ENCODE measurements at regions of chr3 and their contacts with region 1.

Region 1: GRCh38 chr3:49906004-49906743 is 2.5 kb upstream of the MST1R start:
- DNase-seq: peak; percentile 69 to 87
- ATAC-seq: peak; percentile 39
- H3K4me3 ChIP-seq: no peak overlapping the region
- H3K27ac ChIP-seq: peak overlapping the region in 1 of 2 donors; percentile 30
- H3K4me1 ChIP-seq: no peaks in the 10 kb centered on the region
- H3K27me3 ChIP-seq: no peaks in the 10 kb centered on the region

Region 2: DNA sequence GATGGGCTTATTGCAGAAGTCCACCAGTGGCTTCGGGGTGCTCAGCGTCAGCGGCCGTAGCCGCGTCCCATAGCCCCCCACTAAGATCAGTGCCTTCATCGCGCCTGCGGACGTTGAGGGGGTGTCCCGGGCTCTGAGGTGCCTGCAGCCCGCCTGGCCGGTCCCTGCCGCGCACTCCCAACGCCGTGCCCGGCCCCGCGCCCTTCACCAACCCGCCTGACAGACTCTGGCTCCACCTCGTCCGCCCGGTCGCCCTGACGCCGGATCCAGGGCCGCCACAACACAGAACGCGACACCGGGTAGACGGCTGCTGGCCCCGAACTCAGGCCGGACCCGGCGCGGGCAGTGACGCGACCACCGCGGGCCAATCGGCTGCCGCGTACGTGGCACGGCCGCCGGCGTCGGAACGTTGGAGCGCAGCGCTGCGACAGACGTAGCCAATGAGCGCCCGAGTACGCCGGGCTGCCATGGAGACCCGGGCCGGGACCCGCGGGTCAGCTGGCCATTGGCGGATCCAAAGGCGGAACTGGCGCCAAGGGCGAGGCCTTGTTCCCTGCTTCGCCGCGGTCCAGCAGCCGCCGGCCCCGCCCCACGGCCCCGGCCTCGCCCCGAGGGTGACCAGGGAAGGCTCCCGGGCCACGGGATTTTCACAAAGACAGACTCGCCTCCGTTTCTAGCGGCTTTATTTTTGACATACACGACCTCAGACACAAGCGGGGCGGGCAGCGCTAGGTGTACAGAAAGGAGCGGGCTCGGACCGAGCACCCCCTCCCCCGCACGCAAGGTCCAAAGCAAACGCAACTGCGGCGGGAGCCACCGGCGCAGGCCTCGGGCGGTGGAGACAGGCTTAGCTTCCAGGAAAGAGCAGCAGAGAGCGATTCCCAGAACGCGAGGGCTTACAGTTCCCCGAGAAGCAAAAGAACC is 182.3 kb before region 1 on chr3 and contains the start of gene GMPPB:
- intact Hi-C with region 1: loop called in 1 of 2 experiments (anchors 5 kb)
- DNase-seq: peak; percentile 99
- ATAC-seq: peak; percentile 95
- H3K4me3 ChIP-seq: peak within 1 kb of the TSS; percentile 75 to 83
- H3K27ac ChIP-seq: peak within 1 kb of the TSS in 1 of 2 donors; percentile 92
- H3K4me1 ChIP-seq: no peaks in the 10 kb centered on the region
- H3K27me3 ChIP-seq: no peaks in the 10 kb centered on the region
- total RNA-seq, gene GMPPB: 29.2 to 39.6 TPM

Region 3: GRCh38 chr3:49802719-49803464 is 103.3 kb before region 1 on chr3 and contains the start of gene INKA1:
- intact Hi-C with region 1: loop called (anchors 2 to 5 kb)
- DNase-seq: peak; percentile 95 to 97
- ATAC-seq: peak; percentile 93
- H3K4me3 ChIP-seq: peak within 1 kb of the TSS; percentile 51 to 57
- H3K27ac ChIP-seq: peak within 1 kb of the TSS in 1 of 2 donors; percentile 77
- H3K4me1 ChIP-seq: no peaks in the 10 kb centered on the region
- H3K27me3 ChIP-seq: no peaks in the 10 kb centered on the region
- total RNA-seq, gene INKA1: 5.5 to 8.8 TPM

Region 4: GRCh38 chr3:50205414-50206276 is 299.5 kb after region 1 on chr3:
- intact Hi-C with region 1: no loop called
- DNase-seq: no peak
- ATAC-seq: peak; percentile 19
- H3K4me3 ChIP-seq: peak overlapping the region in 1 of 2 donors; percentile 6
- H3K27ac ChIP-seq: no peak overlapping the region
- H3K4me1 ChIP-seq: no peaks in the 10 kb centered on the region
- H3K27me3 ChIP-seq: no peaks in the 10 kb centered on the region